CD8-positive, alpha-beta memory T cell (primary cell): ENCODE measurements at regions of chr3 and their contacts with region 1.

Region 1: GRCh38 chr3:128322066-128323022 is 144.3 kb downstream of the DNAJB8 start:
- DNase-seq: peak; percentile 15 to 70 (median 30)
- H3K4me3 ChIP-seq: no peak overlapping the region
- H3K4me3 Mint-ChIP-seq: no peak overlapping the region
- H3K27ac ChIP-seq: no peak overlapping the region
- H3K27ac Mint-ChIP-seq: no peak overlapping the region
- H3K4me1 ChIP-seq: peaks cover 57% of the 10 kb centered on the region
- H3K4me1 Mint-ChIP-seq: peaks cover 7 to 26% (median 17%) of the 10 kb centered on the region in 3 donors
- H3K27me3 ChIP-seq: no peaks in the 10 kb centered on the region
- H3K27me3 Mint-ChIP-seq: no peaks in the 10 kb centered on the region

Region 2: DNA sequence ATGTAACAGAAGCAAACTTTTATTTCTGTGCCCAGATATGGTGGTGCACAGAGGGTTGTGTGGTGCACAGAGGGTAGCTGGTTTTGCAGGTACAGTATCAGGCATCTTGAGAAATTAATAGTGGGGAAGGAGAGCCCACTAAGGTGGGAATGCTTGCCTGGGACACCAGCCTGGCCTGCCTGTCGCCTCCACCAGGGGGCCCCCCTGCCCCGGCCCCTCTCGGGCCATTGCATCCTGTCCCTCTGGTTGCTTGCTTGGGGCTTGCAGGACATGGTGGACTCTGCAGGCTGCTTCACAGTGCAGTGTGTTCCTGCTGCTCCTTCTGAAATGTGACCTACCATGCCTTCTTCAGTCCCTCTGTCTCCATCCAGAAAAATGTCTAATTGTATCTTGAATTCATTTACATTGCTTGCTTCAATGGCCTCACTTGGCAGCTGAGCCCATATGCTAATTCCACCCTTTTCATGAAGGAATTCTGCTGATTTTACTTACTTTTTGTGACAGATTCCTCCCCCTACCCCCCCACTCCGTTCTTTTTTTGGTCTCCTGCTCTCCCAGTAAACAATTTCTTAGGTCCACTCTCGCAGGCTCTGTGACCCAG is 95.4 kb before region 1 on chr3:
- CTCF ChIA-PET with region 1: interaction called, 16 read pairs
- POLR2A ChIA-PET with region 1: no interaction called
- DNase-seq: peak in 1 of 5 donors; percentile 34
- H3K4me3 ChIP-seq: no peak overlapping the region
- H3K4me3 Mint-ChIP-seq: peak overlapping the region in 1 of 7 donors; percentile 54
- H3K27ac ChIP-seq: no peak overlapping the region
- H3K27ac Mint-ChIP-seq: peak overlapping the region in 2 of 8 donors; percentile 42 to 88
- H3K4me1 ChIP-seq: no peaks in the 10 kb centered on the region
- H3K4me1 Mint-ChIP-seq: peaks cover 0 to 12% (median 4%) of the 10 kb centered on the region in 3 donors
- H3K27me3 ChIP-seq: no peaks in the 10 kb centered on the region
- H3K27me3 Mint-ChIP-seq: peaks cover 0 to 1% of the 10 kb centered on the region in 2 donors

Region 3: DNA sequence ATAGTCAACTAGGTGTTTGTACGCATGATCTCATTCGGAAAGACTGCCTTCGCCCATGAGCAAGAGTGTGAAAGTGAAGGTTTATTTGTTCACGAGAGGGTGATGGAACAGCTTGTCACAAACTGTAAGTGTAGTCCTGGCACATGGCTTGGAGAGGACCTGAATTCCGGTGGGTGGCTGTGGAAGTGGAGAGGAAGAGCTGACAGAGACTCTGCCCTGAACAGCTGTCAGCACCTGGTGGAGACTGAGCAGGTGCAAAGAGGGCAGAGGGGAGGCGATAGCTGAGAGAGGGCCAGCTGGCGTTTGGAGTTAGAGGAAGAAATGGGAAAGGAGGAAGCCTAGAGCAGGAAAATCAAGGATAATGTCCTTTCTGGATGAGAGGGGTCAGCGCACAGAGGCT is 13.3 kb before region 1 on chr3:
- CTCF ChIA-PET with region 1: interaction called, 10 read pairs
- POLR2A ChIA-PET with region 1: no interaction called
- DNase-seq: no peak
- H3K4me3 ChIP-seq: no peak overlapping the region
- H3K4me3 Mint-ChIP-seq: no peak overlapping the region
- H3K27ac ChIP-seq: no peak overlapping the region
- H3K27ac Mint-ChIP-seq: peak overlapping the region in 1 of 8 donors; percentile 16
- H3K4me1 ChIP-seq: peaks cover 14% of the 10 kb centered on the region
- H3K4me1 Mint-ChIP-seq: peaks cover 4 to 10% (median 5%) of the 10 kb centered on the region in 3 donors
- H3K27me3 ChIP-seq: no peaks in the 10 kb centered on the region
- H3K27me3 Mint-ChIP-seq: no peaks in the 10 kb centered on the region

Region 4: GRCh38 chr3:128348805-128349531 is 26.6 kb after region 1 on chr3:
- CTCF ChIA-PET with region 1: no interaction called
- POLR2A ChIA-PET with region 1: no interaction called
- DNase-seq: peak in 1 of 5 donors; percentile 16
- H3K4me3 ChIP-seq: no peak overlapping the region
- H3K4me3 Mint-ChIP-seq: no peak overlapping the region
- H3K27ac ChIP-seq: no peak overlapping the region
- H3K27ac Mint-ChIP-seq: peak overlapping the region in 3 of 8 donors; percentile 8 to 72 (median 14)
- H3K4me1 ChIP-seq: no peaks in the 10 kb centered on the region
- H3K4me1 Mint-ChIP-seq: peaks cover 0 to 8% (median 0%) of the 10 kb centered on the region in 3 donors
- H3K27me3 ChIP-seq: no peaks in the 10 kb centered on the region
- H3K27me3 Mint-ChIP-seq: no peaks in the 10 kb centered on the region

Region 5: DNA sequence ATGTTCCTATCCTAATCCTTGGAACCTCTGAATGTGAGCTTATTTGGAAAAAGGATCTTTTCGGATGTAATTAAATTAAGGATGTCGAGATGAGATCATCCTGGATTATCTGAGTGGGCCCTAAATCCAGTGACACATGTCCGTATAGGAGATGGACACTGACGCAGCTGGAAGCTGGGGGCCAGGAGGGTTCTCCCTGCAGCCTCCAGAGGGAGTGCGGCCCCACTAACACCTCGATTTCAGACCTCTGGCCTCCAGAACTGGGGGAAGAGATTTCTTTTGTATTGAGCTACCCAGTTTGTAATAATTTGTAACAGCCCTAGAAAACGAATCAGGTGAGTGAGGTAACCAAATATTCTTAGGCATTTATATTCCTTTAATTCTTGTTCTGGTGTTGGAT is 141.8 kb after region 1 on chr3:
- CTCF ChIA-PET with region 1: no interaction called
- POLR2A ChIA-PET with region 1: no interaction called
- DNase-seq: no peak
- H3K4me3 ChIP-seq: no peak overlapping the region
- H3K4me3 Mint-ChIP-seq: no peak overlapping the region
- H3K27ac ChIP-seq: no peak overlapping the region
- H3K27ac Mint-ChIP-seq: no peak overlapping the region
- H3K4me1 ChIP-seq: no peaks in the 10 kb centered on the region
- H3K4me1 Mint-ChIP-seq: peaks cover 4 to 6% (median 4%) of the 10 kb centered on the region in 3 donors
- H3K27me3 ChIP-seq: no peaks in the 10 kb centered on the region
- H3K27me3 Mint-ChIP-seq: peaks cover 16 to 41% of the 10 kb centered on the region in 2 donors